Dorsolateral prefrontal cortex (tissue), 120 donors: ENCODE measurements at regions of chr6 and their contacts with region 1.

Region 1: DNA sequence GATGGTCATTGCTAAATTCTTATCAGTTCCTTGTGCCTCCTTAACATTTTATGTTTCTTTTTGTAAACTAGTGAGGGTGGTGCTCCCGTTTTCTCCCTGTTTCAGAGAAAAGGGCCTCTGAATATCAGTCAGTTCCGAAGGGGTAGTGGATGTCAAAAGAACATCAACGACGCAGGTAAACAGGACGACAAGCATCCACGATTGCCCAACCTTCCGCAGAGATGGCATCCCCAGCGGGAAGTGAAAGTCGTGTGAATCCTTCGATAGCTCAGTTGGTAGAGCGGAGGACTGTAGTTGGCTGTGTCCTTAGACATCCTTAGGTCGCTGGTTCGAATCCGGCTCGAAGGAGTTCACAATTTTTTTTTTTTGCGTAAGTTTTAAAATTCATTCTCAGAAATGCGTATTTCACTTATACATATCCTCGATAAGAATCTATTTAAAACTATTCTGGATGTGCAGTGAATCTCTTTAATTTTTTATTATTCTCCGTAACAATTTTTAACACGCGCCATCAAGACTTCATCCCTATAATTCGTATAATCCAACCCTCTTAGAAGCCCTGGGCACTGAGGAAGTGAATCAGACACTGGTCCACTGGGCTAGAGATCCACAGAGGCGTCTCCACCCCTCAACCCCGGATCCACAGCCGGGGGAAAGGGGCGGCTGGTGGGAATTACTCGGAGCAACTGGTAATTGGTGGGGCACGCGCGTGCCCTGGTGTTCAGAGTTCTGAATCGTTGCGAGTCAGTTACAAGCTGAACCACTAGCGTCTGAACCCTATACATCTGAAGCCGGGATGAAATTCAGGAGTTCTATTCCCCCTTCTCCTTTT is 27.9 kb upstream of the ABT1 start:
- DNase-seq: peak; percentile 89 to 97 (median 94)
- H3K4me3 ChIP-seq: peak overlapping the region; percentile 42 to 87 (median 68)
- H3K27ac ChIP-seq: peak overlapping the region; percentile 52 to 97 (median 90)
- H3K27me3 ChIP-seq: no peaks in the 10 kb centered on the region
- CTCF ChIP-seq: peak in 13 of 56 donors; percentile 6 to 29 (median 13)

Region 2: GRCh38 chr6:24891004-24891403 is 1677.8 kb before region 1 on chr6:
- intact Hi-C with region 1: no loop called
- DNase-seq: no peak
- H3K4me3 ChIP-seq: no peak overlapping the region
- H3K27ac ChIP-seq: no peak overlapping the region
- H3K27me3 ChIP-seq: no peaks in the 10 kb centered on the region
- CTCF ChIP-seq: no peak

Region 3: GRCh38 chr6:26342106-26343004 is 226.5 kb before region 1 on chr6:
- intact Hi-C with region 1: loop called in 1 of 2 experiments (anchors 5 kb)
- DNase-seq: no peak
- H3K4me3 ChIP-seq: peak overlapping the region in 28 of 59 donors; percentile 2 to 47 (median 26)
- H3K27ac ChIP-seq: no peak overlapping the region
- H3K27me3 ChIP-seq: peaks cover 0 to 16% (median 0%) of the 10 kb centered on the region in 45 donors
- CTCF ChIP-seq: no peak

Region 4: DNA sequence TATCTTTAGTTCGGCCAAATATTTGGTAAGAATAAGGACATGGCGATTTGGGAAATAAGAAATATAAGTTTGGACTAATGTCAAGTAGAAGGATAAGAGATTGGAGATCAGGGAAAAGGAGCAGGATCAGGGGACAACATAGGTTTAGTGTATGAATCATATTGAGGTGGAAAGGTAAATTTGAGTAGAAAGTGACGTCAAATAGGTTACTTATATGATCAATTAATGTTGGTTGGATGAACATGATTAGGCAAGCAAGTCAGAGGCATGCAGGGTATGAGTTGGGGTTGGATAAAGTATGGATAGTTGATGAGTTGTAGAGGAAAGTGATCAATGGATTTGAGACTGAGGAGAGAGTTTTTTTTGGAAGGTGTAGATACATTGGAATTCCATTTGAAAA is 93.8 kb after region 1 on chr6:
- intact Hi-C with region 1: no loop called
- DNase-seq: no peak
- H3K4me3 ChIP-seq: no peak overlapping the region
- H3K27ac ChIP-seq: no peak overlapping the region
- H3K27me3 ChIP-seq: peaks cover 0 to 36% (median 19%) of the 10 kb centered on the region in 45 donors
- CTCF ChIP-seq: no peak